ENCODE measurements at regions of chr16 and their contacts with region 1.

Region 1: GRCh38 chr16:66483689-66484481 is 56.8 kb downstream of the BEAN1 start:
- DNase-seq: peak; percentile 58
- H3K4me3 Mint-ChIP-seq: no peak overlapping the region
- H3K27ac Mint-ChIP-seq: no peak overlapping the region
- H3K4me1 Mint-ChIP-seq: peaks cover 17% of the 10 kb centered on the region
- H3K27me3 Mint-ChIP-seq: no peaks in the 10 kb centered on the region

Region 2: DNA sequence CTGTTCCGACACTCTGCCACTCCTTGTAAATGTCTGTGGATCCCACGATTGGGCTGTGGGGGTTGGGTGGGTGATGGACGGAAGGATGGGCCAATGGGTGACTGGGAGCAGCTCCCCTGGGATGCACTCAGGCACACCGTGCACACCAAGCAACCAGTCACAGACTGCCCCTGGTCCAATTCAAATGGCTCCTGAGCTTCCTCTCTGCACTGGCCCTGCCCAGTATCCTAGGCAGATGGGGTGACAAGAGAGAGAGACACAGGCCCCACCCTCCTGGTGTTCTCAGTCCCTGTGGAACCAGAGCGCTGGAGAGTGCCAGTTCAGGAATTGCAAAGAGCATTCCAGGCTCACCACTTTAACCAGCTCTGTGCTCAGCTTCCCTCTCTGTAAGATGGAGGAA is 24.0 kb before region 1 on chr16:
- intact Hi-C with region 1: no loop called
- DNase-seq: no peak
- H3K4me3 Mint-ChIP-seq: no peak overlapping the region
- H3K27ac Mint-ChIP-seq: no peak overlapping the region
- H3K4me1 Mint-ChIP-seq: no peaks in the 10 kb centered on the region
- H3K27me3 Mint-ChIP-seq: peaks cover 51% of the 10 kb centered on the region

Region 3: GRCh38 chr16:66516808-66517585 is 33.1 kb after region 1 on chr16:
- intact Hi-C with region 1: loop called (anchors 2 kb)
- DNase-seq: peak; percentile 75
- H3K4me3 Mint-ChIP-seq: peak overlapping the region; percentile 82
- H3K27ac Mint-ChIP-seq: peak overlapping the region; percentile 99
- H3K4me1 Mint-ChIP-seq: peaks cover 59% of the 10 kb centered on the region
- H3K27me3 Mint-ChIP-seq: no peaks in the 10 kb centered on the region